ENCODE measurements at regions of chr17 and their contacts with region 1.

Region 1: DNA sequence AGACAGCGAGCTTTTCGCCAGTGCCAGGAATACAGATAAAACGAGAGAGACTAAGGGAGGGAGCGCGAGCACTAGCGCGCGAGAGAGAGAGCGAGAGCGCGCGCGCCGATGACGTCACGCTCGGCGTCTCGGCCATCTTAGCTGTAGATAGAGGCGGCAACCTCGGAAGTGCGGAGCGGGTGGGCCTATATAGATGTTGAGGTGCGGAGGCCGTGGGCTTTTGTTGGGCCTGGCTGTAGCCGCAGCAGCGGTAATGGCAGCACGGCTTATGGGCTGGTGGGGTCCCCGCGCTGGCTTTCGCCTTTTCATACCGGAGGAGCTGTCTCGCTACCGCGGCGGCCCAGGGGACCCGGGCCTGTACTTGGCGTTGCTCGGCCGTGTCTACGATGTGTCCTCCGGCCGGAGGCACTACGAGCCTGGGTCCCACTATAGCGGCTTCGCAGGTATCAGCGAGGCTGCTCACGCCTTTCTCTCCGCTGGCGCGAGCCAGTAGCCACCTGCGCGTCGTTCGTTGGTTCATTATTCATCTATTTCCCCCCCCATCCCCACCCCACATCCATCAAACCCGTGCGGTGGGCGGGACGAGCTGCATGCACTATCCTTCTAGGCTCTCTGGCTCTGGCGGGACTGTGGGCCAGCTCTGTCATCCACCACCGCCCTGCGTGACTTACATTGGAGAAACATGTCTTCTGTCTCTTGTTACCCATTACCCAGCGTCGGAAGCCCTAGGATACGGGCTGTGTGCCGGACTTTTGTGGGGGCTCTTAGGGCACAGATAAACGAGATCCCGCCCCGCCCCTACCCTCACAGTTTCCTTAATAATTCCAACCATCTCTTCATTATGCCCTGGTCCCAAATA is 795 bp downstream of the CYB5D2 start:
- DNase-seq: peak; percentile 95
- ATAC-seq: peak; percentile 82
- H3K4me3 Mint-ChIP-seq: peak overlapping the region; percentile 97
- H3K27ac Mint-ChIP-seq: peak overlapping the region; percentile 99
- H3K4me1 Mint-ChIP-seq: peaks cover 40% of the 10 kb centered on the region
- H3K27me3 Mint-ChIP-seq: no peaks in the 10 kb centered on the region

Region 2: DNA sequence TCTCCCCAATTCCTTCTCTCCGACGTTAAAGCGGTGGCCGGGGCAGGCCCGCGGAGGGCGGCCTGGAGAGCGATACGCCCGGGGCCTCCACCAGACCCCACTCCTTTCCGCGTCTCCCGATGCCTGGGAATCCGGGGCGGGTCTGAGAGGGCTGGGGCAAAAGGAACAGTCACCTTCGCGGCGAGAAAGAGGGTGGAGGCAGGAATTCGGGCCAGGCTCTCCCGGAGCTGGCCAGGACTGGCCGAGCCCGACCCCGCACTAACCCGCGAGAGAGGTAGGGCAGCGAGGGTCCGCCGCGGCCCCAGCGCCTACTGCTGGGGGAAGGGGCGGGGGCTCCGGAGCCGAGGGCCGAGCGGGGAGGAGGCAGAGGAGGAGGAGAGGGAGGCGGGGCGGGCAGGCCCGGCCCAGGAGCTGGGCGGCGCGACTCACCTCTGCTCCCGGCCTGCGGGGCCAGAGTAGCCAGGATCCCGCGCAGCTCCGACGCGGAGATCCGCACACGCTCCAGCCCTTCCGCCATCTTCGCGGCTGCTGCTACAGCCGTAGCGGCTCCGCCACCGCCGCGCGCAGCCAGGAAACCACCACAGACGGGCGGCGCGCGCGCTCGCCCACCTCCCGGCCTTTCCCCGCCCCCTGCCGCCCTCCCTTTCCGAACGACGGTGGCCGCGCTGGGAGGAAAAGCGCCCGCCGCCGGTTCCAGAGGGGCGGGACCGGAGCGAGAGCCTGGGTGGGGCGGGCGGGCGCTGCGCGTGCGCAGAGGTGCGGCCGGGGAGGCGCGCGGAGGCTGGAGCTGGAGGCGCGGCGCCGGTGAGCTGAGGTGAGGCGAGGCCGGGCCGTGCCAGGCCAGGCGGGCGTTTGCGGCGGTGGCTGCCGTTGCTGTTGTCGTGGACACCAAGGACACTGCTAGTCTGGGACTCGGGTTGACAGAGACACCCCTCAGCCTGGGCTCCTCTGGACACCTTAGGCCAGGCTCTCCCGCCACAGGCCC is 1840.3 kb before region 1 on chr17 and contains the starts of genes SMG6 and SRR:
- CTCF ChIA-PET with region 1: no interaction called
- POLR2A ChIA-PET with region 1: no interaction called
- intact Hi-C with region 1: loop called in 1 of 2 experiments (anchors 2 kb)
- DNase-seq: peak; percentile 98
- ATAC-seq: peak; percentile 89
- H3K4me3 Mint-ChIP-seq: peak within 1 kb of the TSS; percentile 81
- H3K27ac Mint-ChIP-seq: peak within 1 kb of the TSS; percentile 61
- H3K4me1 Mint-ChIP-seq: peaks cover 46% of the 10 kb centered on the region
- H3K27me3 Mint-ChIP-seq: no peaks in the 10 kb centered on the region
- total RNA-seq, gene SMG6: 28.5 to 31.4 TPM
- total RNA-seq, gene SRR: 15.4 to 18.3 TPM

Region 3: DNA sequence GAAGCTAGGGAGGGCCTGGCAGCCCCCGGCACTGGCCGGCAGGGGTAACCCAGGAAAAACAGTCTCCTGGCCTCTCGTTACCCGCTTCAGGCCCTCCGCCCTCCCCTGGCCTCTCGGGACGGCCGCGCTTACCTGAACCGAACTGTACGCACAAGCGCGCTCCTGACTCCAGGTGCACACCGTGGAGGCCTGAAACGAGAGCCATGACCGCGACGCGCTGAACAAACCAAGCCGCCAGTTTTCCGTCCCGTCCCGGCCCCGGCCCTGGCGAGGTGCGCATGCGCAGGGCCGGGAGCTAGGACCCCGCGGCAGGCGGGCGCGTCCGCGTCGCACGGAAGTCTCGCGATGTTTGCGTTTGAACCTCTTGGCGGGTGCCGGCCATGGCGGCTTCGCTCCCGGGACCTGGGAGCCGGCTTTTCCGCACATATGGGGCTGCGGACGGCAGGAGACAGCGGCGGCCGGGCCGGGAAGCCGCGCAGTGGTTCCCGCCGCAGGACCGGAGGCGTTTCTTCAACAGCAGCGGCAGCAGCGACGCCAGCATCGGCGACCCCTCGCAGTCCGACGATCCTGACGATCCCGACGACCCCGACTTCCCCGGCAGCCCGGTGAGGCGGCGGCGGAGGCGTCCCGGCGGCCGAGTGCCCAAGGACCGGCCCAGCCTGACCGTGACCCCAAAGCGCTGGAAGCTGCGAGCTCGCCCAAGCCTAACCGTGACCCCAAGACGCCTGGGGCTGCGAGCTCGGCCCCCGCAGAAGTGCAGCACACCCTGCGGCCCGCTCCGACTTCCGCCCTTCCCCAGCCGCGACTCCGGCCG is 420.0 kb before region 1 on chr17 and contains the start of gene HASPIN:
- CTCF ChIA-PET with region 1: no interaction called
- POLR2A ChIA-PET with region 1: no interaction called
- intact Hi-C with region 1: loop called in 1 of 2 experiments (anchors 5 kb)
- DNase-seq: peak; percentile 96
- ATAC-seq: peak; percentile 86
- H3K4me3 Mint-ChIP-seq: peak within 1 kb of the TSS; percentile 83
- H3K27ac Mint-ChIP-seq: peak within 1 kb of the TSS; percentile 93
- H3K4me1 Mint-ChIP-seq: peaks cover 58% of the 10 kb centered on the region
- H3K27me3 Mint-ChIP-seq: no peaks in the 10 kb centered on the region
- total RNA-seq, gene HASPIN: 21.0 to 25.2 TPM

Region 4: GRCh38 chr17:4110152-4110551 is 33.6 kb before region 1 on chr17:
- CTCF ChIA-PET with region 1: no interaction called
- POLR2A ChIA-PET with region 1: no interaction called
- intact Hi-C with region 1: no loop called
- DNase-seq: no peak
- ATAC-seq: peak; percentile 42
- H3K4me3 Mint-ChIP-seq: no peak overlapping the region
- H3K27ac Mint-ChIP-seq: peak overlapping the region; percentile 69
- H3K4me1 Mint-ChIP-seq: peaks cover 16% of the 10 kb centered on the region
- H3K27me3 Mint-ChIP-seq: no peaks in the 10 kb centered on the region

Region 5: DNA sequence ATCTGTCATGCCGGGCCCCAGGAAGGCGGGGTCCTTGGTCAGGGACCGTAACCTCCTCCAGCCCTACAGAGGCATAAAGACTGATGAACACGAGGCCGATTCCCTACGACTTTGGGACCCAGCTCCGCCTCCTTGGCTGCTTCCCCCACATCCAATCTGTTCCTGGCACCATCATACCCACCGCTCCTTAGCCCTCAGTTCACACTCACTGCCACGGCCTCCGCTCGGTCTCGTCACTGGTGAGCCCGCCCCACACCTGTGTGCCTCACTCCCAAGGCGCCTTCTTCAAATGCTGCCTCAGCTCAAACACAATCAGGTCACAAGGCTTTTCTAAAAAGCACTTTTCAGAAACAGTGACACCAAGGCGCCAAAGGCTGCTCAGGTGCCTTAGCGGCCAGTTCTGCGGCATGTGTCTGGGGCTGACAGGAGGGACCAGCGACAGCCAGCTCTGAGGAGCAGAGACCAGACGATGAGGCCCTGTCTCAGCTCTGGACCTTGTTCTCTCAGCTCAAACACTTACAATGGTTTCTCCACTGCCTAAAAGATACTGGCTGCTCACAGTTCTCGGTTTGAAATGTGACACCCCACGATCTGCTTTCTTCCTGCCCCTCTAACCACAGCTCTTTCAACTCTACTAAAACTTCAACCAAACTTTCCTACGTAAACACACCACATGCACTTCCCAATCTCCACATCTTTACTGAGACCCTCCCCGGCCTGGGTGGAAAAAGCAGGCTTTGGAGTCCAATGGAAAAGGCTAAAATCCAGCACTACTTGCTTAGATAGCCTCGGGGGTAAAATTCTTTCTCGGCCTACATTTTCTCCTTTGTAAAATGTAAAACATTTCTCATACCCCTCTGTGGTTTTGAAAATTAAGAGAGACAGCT is 32.4 kb after region 1 on chr17:
- CTCF ChIA-PET with region 1: interaction called, 3 read pairs
- POLR2A ChIA-PET with region 1: interaction called, 9 read pairs
- intact Hi-C with region 1: loop called (anchors 1 to 2 kb)
- DNase-seq: peak; percentile 66
- ATAC-seq: peak; percentile 81
- H3K4me3 Mint-ChIP-seq: peak overlapping the region; percentile 48
- H3K27ac Mint-ChIP-seq: peak overlapping the region; percentile 96
- H3K4me1 Mint-ChIP-seq: peaks cover 49% of the 10 kb centered on the region
- H3K27me3 Mint-ChIP-seq: no peaks in the 10 kb centered on the region

Region 6: GRCh38 chr17:4565209-4566141 is 421.7 kb after region 1 on chr17:
- CTCF ChIA-PET with region 1: no interaction called
- POLR2A ChIA-PET with region 1: no interaction called
- intact Hi-C with region 1: loop called in 1 of 2 experiments (anchors 2 kb)
- DNase-seq: peak; percentile 78
- ATAC-seq: peak; percentile 69
- H3K4me3 Mint-ChIP-seq: no peak overlapping the region
- H3K27ac Mint-ChIP-seq: no peak overlapping the region
- H3K4me1 Mint-ChIP-seq: peaks cover 38% of the 10 kb centered on the region
- H3K27me3 Mint-ChIP-seq: peaks cover 2% of the 10 kb centered on the region

Region 7: GRCh38 chr17:4939796-4940624 is 796.2 kb after region 1 on chr17 and contains the starts of genes RNF167 and SLC25A11:
- CTCF ChIA-PET with region 1: no interaction called
- POLR2A ChIA-PET with region 1: no interaction called
- intact Hi-C with region 1: loop called in 1 of 2 experiments (anchors 2 kb)
- DNase-seq: peak; percentile 98
- ATAC-seq: peak; percentile 83
- H3K4me3 Mint-ChIP-seq: peak within 1 kb of the TSS; percentile 99
- H3K27ac Mint-ChIP-seq: peak within 1 kb of the TSS; percentile 97
- H3K4me1 Mint-ChIP-seq: peaks cover 54% of the 10 kb centered on the region
- H3K27me3 Mint-ChIP-seq: no peaks in the 10 kb centered on the region
- total RNA-seq, gene RNF167: 147 to 189 TPM
- total RNA-seq, gene SLC25A11: 74.2 to 77.9 TPM

Measured in activated CD4-positive, alpha-beta T cell treated with anti-CD3 and anti-CD28 coated beads for 36 hours (primary cell).